ENCODE measurements at regions of chr11 and their contacts with region 1.

Region 1: GRCh38 chr11:120235024-120235861 is 4.7 kb upstream of the POU2F3 start:
- DNase-seq: peak; percentile 79
- H3K4me3 ChIP-seq: no peak overlapping the region
- H3K27ac ChIP-seq: peak overlapping the region in 1 of 2 donors; percentile 47
- H3K4me1 ChIP-seq: no peaks in the 10 kb centered on the region
- H3K27me3 ChIP-seq: no peaks in the 10 kb centered on the region
- CTCF ChIP-seq: peak; percentile 79 to 93 (median 90)
- POLR2A ChIP-seq: no peak

Region 2: DNA sequence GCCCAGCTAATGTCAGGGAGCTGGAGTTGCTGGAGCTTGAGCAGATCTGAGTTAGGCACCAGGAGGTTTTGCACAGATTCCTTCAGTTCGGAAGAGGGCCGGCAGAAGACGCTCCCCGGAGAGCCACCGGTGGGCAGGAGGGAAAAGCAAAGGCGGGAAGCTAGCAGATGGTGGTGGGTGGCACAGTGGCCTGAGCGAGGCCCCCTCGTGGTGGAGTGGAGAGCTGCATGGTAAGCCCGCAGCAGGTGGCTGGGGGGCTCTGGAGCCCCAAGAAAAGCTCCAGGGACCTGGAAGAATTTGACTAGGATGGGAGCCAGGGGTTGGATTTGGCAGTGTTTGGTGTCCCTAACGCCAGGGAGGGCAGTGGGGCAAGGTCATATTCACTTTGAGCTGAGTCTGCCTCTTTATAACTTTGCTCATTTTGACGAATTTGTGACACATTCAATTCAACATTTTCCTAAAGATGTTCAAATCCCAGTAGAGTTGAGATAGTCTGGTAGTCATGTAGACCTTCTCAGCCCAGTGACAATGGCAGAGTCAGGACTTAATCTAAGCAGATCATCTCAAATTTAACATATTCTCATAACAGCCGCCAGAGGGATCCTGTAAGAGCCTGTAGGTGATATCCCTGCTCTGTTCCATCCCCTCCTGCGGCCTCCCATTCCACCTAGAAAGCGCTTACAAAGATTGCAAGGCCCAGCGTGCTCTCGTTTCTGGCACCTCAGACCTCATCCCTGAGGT is 155.3 kb before region 1 on chr11:
- intact Hi-C with region 1: no loop called
- DNase-seq: no peak
- H3K4me3 ChIP-seq: no peak overlapping the region
- H3K27ac ChIP-seq: no peak overlapping the region
- H3K4me1 ChIP-seq: no peaks in the 10 kb centered on the region
- H3K27me3 ChIP-seq: no peaks in the 10 kb centered on the region
- CTCF ChIP-seq: peak in 3 of 4 experiments; percentile 34 to 46 (median 41)
- POLR2A ChIP-seq: no peak

Region 3: GRCh38 chr11:120180551-120181232 is 54.6 kb before region 1 on chr11:
- intact Hi-C with region 1: no loop called
- DNase-seq: no peak
- H3K4me3 ChIP-seq: no peak overlapping the region
- H3K27ac ChIP-seq: no peak overlapping the region
- H3K4me1 ChIP-seq: no peaks in the 10 kb centered on the region
- H3K27me3 ChIP-seq: no peaks in the 10 kb centered on the region
- CTCF ChIP-seq: no peak
- POLR2A ChIP-seq: no peak

Region 4: DNA sequence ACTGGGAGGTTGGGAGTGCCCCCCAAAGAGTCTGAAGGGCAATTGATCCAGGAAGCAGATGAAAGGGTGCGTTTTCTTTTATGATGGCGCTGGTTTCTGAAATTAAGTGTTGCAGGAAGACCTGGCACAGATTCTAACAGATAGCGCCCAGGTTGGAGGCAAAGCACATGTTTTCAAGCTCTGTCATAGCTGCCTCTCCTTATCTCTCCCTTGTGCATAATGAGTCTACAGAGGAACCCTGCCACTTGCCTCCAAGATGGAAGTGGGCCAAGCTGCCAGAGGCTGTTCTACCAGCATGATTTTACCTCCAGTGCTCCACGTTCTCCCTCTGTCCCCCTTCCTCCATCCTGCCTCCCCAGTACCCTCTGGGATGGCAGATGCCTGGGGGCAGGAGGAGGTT is 59.8 kb after region 1 on chr11:
- intact Hi-C with region 1: loop called (anchors 5 kb)
- DNase-seq: no peak
- H3K4me3 ChIP-seq: no peak overlapping the region
- H3K27ac ChIP-seq: no peak overlapping the region
- H3K4me1 ChIP-seq: peaks cover under 1% of the 10 kb centered on the region
- H3K27me3 ChIP-seq: no peaks in the 10 kb centered on the region
- CTCF ChIP-seq: no peak
- POLR2A ChIP-seq: no peak

Region 5: DNA sequence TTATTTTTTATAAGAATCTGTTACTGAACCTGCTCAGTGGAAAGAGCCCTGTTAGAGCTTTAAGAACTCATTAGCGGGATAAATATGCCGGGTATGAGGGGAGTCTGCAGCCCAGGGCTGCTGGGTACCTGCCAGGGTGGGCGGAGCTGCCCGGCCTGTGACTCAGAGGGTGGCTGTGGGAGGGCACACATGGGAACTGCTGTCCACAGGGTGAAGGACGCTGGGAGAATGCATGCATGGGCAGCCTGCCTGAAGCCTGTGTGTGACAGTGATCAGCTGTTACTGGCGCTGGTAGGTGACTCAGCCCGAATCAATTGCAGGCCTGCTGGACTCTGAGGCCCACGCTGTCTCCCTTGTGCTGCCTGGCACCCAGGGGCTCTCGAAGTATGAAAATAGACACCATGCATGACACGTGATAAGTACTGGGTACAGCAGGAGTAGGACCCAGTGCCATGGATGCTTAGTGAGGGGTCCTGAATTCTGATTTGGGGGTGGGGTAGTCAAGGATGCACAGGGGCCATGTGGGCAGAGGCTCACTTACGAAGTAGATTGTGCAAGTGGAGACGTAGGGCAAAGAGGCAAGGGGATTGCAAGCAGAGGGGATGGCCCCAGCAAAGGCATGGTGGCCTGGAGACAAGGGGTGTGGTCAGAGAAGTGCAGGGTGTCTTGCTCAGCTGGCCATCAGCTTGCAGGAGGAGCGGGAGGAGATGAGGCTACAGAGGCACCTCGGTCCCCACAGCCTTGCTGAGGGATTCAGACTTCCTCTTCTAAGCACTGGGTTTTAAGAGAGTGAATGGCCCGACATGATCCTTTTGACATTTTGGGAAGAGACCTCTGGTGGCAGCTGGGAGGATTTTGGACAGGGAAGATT is 312.8 kb after region 1 on chr11:
- intact Hi-C with region 1: no loop called
- DNase-seq: peak; percentile 62
- H3K4me3 ChIP-seq: no peak overlapping the region
- H3K27ac ChIP-seq: peak overlapping the region in 1 of 2 donors; percentile 27
- H3K4me1 ChIP-seq: no peaks in the 10 kb centered on the region
- H3K27me3 ChIP-seq: no peaks in the 10 kb centered on the region
- CTCF ChIP-seq: no peak
- POLR2A ChIP-seq: no peak